Aorta (tissue), 5 donors: ENCODE measurements at regions of chr7 and their contacts with region 1.

Region 1: DNA sequence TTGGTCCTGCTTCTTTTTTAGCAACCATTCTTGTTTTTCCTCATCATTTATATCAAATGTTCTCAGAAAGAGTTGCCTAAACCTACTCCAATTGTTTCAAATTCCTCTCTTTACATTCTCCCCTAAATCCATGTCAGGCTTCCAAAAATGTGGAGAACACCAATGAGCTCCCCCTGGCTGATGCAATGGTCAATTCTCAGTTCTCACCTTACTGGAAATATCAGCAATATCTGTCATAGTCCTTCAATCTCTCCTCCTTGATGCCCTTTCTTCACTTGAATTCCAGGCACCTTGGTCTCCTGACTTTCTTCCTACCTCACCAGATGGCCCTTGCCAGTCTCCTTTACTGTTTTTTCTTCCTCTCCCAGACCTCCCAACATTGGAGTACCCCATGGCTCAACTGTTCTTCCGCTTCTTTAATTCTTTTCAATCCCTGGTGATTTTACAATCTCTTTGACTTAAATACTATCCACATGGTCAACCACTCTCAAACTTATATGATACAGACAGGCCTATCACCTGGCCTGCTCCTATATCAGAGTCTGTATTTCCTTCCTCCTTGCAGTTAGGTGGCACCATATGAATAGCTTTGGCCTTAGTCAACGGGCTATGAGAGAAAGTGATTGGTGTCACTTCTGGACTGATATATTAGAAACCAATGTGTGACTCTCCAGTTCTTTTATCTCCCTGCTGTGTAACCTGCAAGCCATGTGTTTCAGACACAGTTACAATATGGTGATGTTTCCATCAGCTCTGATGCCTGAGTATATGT is 47.4 kb upstream of the CAV2 start:
- DNase-seq: no peak
- ATAC-seq: no peak
- H3K4me3 ChIP-seq: no peak overlapping the region
- H3K27ac ChIP-seq: no peak overlapping the region
- H3K4me1 ChIP-seq: peaks cover 2 to 5% of the 10 kb centered on the region in 2 donors
- H3K27me3 ChIP-seq: no peaks in the 10 kb centered on the region

Region 2: DNA sequence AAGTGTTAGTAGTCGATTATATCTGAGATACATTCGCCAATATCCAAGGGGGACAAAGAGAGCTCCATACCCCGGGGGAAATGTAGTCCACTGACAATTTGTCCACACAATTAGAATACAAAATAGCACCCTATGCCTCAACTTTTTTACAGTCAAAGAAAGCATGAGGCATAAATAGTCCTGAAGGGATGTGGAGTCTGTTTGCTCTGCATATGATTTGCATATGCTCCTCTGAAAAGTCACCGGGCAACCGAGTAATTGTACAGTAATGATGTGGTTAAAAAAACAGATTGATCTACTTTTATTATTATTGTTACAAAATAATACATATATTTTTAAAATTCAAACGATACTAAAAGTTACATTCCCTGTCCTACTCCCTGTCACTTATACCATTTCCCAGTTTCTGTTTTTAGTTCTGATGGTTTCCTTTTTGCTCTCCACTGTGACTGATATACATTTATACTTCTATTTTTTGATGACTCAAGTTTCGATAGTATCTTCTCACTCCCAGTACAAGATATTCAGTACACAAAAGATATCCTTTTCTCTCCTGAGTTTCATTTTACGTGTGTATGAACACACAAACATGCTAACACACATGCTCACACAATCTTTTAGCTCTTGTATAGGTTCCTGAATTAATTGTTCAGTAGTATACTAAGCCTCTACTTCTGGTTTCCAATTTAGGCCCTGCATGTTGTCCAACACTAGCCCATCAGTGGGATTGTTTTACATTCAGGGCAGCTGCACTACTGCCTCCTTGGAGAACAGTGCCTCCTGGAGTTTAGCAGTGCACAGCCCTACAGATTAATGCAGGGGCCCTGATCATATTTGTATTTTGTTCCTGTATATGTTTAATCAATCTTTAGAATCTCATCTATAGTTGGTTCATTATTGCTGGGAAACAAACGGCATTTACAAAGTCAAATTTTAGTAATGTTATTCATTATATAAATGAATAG is 110.9 kb before region 1 on chr7:
- intact Hi-C with region 1: no loop called
- DNase-seq: no peak
- ATAC-seq: no peak
- H3K4me3 ChIP-seq: no peak overlapping the region
- H3K27ac ChIP-seq: no peak overlapping the region
- H3K4me1 ChIP-seq: peaks cover 2 to 10% of the 10 kb centered on the region in 2 donors
- H3K27me3 ChIP-seq: no peaks in the 10 kb centered on the region

Region 3: GRCh38 chr7:116464375-116464774 is 12.2 kb after region 1 on chr7:
- intact Hi-C with region 1: no loop called
- DNase-seq: no peak
- ATAC-seq: no peak
- H3K4me3 ChIP-seq: no peak overlapping the region
- H3K27ac ChIP-seq: no peak overlapping the region
- H3K4me1 ChIP-seq: peaks cover 0 to 2% of the 10 kb centered on the region in 2 donors
- H3K27me3 ChIP-seq: no peaks in the 10 kb centered on the region

Region 4: DNA sequence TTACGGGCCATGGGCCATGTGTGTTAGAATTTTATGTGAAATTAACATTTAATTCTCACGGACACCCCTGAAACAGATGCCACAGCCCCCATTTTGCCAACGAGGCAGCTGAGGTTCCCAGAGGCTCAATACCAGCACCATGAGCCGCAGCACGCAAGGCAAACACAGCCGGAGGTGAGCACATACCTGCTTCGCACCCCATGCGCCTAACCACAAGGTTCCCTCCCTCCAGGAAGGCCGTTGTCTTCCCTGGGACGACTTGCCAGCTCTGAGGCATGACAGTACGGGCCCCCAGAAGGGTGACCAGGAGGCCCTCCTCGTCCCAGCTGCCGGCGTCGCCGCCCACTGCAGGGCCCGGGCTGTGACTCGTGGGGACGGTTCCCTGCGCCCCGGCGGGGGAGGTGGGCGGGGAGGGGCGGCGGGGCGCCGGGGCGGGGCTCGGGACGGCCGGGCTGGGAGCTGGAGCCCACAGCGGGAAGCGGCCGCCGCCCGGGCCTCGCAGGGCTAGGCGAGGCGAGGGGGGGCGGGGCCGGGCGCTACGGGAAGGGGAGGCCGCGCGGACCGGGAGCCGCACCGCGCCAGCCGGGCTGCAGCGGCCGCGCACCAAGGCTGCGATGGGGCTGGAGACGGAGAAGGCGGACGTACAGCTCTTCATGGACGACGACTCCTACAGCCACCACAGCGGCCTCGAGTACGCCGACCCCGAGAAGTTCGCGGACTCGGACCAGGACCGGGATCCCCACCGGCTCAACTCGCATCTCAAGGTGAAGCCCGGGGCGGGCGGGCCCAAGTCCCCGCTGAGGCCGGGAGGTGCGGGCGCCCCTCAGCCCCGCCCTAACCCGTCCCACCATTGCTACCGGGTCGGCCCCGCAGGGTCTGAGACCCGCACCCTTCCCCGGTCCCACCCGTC is 47.3 kb after region 1 on chr7 and contains the start of gene CAV2:
- intact Hi-C with region 1: loop called (anchors 5 kb)
- DNase-seq: peak; percentile 81 to 93
- ATAC-seq: peak; percentile 91
- H3K4me3 ChIP-seq: peak within 1 kb of the TSS; percentile 60 to 80
- H3K27ac ChIP-seq: peak within 1 kb of the TSS; percentile 20 to 90
- H3K4me1 ChIP-seq: no peaks in the 10 kb centered on the region
- H3K27me3 ChIP-seq: no peaks in the 10 kb centered on the region
- total RNA-seq, gene CAV2: 86.7 to 131 TPM